PC-3 (cell line): ENCODE measurements at regions of chr1 and their contacts with region 1.

Region 1: GRCh38 chr1:153572569-153573015 is 6.9 kb upstream of the S100A2 start:
- DNase-seq: peak; percentile 94
- ATAC-seq: peak; percentile 67
- H3K4me3 ChIP-seq: 0 out of 2 replicates have a peak overlapping the region, but pooled peaks have one; percentile 0
- H3K27ac ChIP-seq: peak overlapping the region; percentile 76
- H3K4me1 ChIP-seq: peaks cover 39% of the 10 kb centered on the region
- H3K27me3 ChIP-seq: no peaks in the 10 kb centered on the region
- CTCF ChIP-seq: peak; percentile 98

Region 2: DNA sequence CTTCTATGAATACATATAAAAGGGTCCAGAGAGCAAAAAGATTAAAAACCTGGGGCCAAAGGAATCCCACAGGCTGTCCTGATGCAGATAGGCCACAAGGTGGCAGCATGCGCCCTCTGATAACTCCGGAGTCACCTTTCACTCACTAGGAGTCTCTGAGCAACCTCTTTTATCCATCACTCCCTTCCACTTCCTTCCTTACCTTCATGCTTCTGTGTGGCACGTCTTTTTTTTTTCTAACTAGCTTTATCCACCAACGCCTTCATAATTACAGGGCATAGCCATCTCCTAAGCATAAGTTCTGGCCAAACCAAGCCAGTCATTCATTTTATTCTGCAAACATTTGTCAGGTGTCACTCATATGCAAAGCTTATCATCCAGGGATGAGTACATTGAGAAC is 220.1 kb before region 1 on chr1:
- CTCF ChIA-PET with region 1: no interaction called
- POLR2A ChIA-PET with region 1: interaction called, 3 read pairs
- intact Hi-C with region 1: loop called (anchors 1 kb)
- DNase-seq: peak; percentile 89
- ATAC-seq: peak; percentile 68
- H3K4me3 ChIP-seq: no peak overlapping the region
- H3K27ac ChIP-seq: no peak overlapping the region
- H3K4me1 ChIP-seq: peaks cover 34% of the 10 kb centered on the region
- H3K27me3 ChIP-seq: peaks cover 41% of the 10 kb centered on the region
- CTCF ChIP-seq: peak; percentile 97

Region 3: GRCh38 chr1:153532769-153533599 is 39.6 kb before region 1 on chr1:
- CTCF ChIA-PET with region 1: interaction called, 24 read pairs
- POLR2A ChIA-PET with region 1: interaction called, 47 read pairs
- intact Hi-C with region 1: loop called (anchors 1 kb)
- DNase-seq: peak; percentile 87
- ATAC-seq: peak; percentile 21
- H3K4me3 ChIP-seq: peak overlapping the region; percentile 28; the same call in 1 of the 2 replicates
- H3K27ac ChIP-seq: peak overlapping the region; percentile 94
- H3K4me1 ChIP-seq: peaks cover 46% of the 10 kb centered on the region
- H3K27me3 ChIP-seq: no peaks in the 10 kb centered on the region
- CTCF ChIP-seq: peak; percentile 96

Region 4: DNA sequence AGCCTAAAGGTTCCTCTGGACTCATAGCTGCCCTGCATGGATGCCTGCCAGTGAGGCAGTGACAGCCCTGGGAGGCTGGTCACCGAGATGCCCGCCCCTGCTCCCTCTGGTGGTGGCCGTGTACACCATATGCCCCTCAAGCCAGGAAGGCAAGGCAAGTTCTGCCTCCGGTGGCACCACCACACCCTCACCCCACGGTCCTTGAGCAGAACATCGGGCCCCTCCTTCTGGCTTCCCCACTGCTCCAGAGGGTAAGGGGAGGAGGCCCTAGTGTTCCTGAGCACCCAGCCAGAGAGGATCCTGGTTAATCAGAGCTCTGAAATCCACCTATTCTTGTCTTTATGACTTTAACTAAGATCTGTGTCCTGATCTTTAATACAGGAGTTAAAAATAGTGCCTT is 45.1 kb after region 1 on chr1:
- CTCF ChIA-PET with region 1: interaction called, 14 read pairs
- POLR2A ChIA-PET with region 1: interaction called, 12 read pairs
- intact Hi-C with region 1: loop called (anchors 1 kb)
- DNase-seq: peak; percentile 96
- ATAC-seq: peak; percentile 71
- H3K4me3 ChIP-seq: no peak overlapping the region
- H3K27ac ChIP-seq: peak overlapping the region; percentile 87
- H3K4me1 ChIP-seq: peaks cover 49% of the 10 kb centered on the region
- H3K27me3 ChIP-seq: no peaks in the 10 kb centered on the region
- CTCF ChIP-seq: peak; percentile 95

Region 5: DNA sequence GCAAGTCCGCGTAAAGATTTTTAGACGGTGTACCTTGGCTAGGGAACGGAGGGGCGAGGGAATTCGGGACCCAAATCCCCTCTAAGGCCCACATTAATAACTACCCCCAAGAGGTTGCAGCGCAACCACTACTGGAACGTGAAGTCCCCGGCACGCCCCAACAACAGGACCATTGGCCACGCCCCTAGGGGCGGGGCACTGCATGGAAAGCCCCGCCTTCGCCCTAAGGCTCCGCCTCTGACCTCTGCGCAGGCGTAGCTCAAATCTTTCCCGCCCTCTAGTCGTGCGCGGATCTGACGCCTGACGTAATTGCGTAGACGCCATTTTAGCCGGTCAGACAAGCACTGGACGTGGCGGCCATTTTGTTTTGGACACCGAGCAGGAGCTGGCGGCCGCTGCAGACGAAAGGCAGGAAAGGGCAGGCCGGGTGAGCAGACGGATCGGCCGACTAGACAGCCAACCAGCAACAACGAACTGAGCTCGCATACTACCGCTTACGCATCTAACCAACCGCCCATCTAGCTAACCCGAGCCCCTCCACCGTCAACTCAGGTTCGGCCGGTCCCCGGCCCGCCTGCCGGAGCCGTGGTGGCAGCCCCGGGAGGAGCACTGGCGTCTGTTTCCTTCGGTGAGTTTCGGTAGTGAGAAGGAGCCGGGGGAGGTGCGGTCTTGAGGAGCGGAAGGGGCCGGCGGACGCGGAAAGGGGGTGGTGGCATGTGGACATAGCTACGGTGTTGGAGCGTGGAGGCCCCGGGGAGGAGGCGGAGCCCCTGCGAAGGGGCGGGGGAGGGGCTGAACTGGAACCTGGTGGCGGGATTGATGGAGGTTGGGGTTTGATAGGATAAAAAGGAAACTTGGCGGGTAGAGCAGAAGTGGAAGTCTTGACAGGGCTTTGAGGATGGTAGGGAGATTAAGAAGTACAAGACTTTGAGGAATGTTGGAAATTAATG is 61.4 kb after region 1 on chr1 and contains the start of gene CHTOP:
- CTCF ChIA-PET with region 1: interaction called, 25 read pairs
- POLR2A ChIA-PET with region 1: interaction called, 8 read pairs
- intact Hi-C with region 1: no loop called
- DNase-seq: peak; percentile 100
- ATAC-seq: peak; percentile 88
- H3K4me3 ChIP-seq: peak within 1 kb of the TSS; percentile 83
- H3K27ac ChIP-seq: peak within 1 kb of the TSS; percentile 97
- H3K4me1 ChIP-seq: peaks cover 18% of the 10 kb centered on the region
- H3K27me3 ChIP-seq: no peaks in the 10 kb centered on the region
- CTCF ChIP-seq: no peak
- total RNA-seq, gene CHTOP: 101 and 112 TPM in 2 replicates

Region 6: GRCh38 chr1:153749408-153750005 is 176.9 kb after region 1 on chr1:
- CTCF ChIA-PET with region 1: no interaction called
- POLR2A ChIA-PET with region 1: no interaction called
- intact Hi-C with region 1: loop called (anchors 2 kb)
- DNase-seq: peak; percentile 92
- ATAC-seq: peak; percentile 100
- H3K4me3 ChIP-seq: no peak overlapping the region
- H3K27ac ChIP-seq: no peak overlapping the region
- H3K4me1 ChIP-seq: no peaks in the 10 kb centered on the region
- H3K27me3 ChIP-seq: no peaks in the 10 kb centered on the region
- CTCF ChIP-seq: peak; percentile 99